ENCODE measurements at regions of chr12 and their contacts with region 1.

Region 1: GRCh38 chr12:52023182-52023975 is 16.6 kb downstream of the TAMALIN start:
- DNase-seq: peak; percentile 96
- H3K4me3 Mint-ChIP-seq: peak overlapping the region; percentile 84
- H3K27ac Mint-ChIP-seq: peak overlapping the region; percentile 99
- H3K4me1 Mint-ChIP-seq: peaks cover 51% of the 10 kb centered on the region
- H3K27me3 Mint-ChIP-seq: peaks cover 41% of the 10 kb centered on the region

Region 2: DNA sequence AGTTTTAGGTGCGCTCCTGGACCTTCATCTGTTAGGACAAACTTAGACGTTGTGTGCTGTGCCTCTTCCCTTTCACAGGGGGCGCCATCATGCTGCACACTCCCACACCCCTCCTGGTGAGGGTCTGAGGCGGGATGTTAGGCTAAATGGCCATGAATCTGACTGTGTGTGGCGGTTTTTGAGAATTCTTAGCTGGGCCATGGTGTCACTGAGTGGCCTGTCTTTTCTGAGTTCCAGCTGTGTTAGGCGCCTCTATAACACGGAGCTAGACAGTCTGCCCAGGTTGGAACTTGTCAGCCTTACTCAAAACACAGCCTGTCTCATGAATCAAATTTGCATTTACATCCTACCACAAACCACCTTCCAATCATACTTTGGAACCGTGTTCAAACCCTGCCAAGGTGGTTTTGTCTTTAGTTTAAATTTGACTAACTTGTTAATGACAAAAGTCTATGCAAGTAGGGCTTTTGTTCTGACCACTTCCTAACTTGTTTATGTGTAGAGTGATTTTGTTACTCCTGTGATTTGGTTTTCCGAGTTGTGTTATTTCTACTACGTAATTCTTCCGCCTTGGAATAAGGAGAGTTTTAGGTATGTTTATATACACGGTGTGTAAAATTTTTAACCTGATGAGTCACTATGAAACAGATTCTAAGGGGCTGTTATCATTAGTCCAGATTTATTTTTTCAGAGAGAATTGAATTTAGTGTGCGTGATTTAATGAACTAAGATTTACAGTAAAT is 52.3 kb before region 1 on chr12:
- CTCF ChIA-PET with region 1: interaction called, 11 read pairs
- DNase-seq: peak; percentile 43
- H3K4me3 Mint-ChIP-seq: peak overlapping the region; percentile 25
- H3K27ac Mint-ChIP-seq: peak overlapping the region; percentile 84
- H3K4me1 Mint-ChIP-seq: peaks cover 62% of the 10 kb centered on the region
- H3K27me3 Mint-ChIP-seq: peaks cover 3% of the 10 kb centered on the region

Region 3: GRCh38 chr12:51994959-51995358 is 28.4 kb before region 1 on chr12:
- CTCF ChIA-PET with region 1: interaction called, 254 read pairs
- DNase-seq: no peak
- H3K4me3 Mint-ChIP-seq: no peak overlapping the region
- H3K27ac Mint-ChIP-seq: no peak overlapping the region
- H3K4me1 Mint-ChIP-seq: peaks cover 3% of the 10 kb centered on the region
- H3K27me3 Mint-ChIP-seq: no peaks in the 10 kb centered on the region

Region 4: GRCh38 chr12:52041695-52042123 is 18.3 kb after region 1 on chr12:
- CTCF ChIA-PET with region 1: interaction called, 44 read pairs
- DNase-seq: peak; percentile 62
- H3K4me3 Mint-ChIP-seq: no peak overlapping the region
- H3K27ac Mint-ChIP-seq: peak overlapping the region; percentile 50
- H3K4me1 Mint-ChIP-seq: peaks cover 50% of the 10 kb centered on the region
- H3K27me3 Mint-ChIP-seq: peaks cover 37% of the 10 kb centered on the region

Region 5: DNA sequence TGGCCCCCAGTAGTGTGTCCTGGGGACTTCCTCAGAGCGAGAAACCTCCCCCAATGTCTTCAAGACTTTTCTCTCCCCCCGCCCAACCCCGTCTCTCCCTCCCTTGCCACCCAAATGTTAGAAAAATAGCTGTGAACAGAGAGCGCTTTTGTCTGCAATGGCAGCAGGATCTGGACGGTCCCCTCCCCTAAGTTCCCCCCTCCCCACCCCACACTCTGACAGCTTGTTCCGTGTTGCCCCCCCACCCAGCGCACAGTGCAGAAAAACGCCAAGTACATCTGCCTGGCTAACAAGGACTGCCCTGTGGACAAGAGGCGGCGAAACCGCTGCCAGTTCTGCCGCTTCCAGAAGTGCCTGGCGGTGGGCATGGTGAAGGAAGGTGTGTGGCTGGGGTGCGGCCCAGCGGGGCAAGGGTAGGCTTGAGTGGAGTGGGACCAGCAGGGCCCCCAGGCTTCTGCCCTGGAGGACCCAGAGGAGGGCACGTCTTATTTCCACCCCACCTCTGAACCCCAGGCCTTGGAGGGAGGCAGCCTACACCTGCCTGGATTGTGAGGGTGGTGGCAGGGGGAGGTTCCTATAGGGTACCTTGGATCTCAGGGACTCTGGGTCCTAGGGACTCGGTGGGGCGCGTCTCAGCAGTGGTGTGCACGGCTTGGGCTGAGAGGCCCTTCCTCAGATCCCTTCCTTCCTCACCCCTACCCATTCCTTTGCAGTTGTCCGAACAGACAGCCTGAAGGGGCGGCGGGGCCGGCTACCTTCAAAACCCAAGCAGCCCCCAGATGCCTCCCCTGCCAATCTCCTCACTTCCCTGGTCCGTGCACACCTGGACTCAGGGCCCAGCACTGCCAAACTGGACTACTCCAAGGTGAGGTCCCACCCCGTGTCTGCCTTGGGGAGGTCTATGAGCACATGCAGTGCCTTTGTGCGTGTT is 32.7 kb after region 1 on chr12:
- CTCF ChIA-PET with region 1: interaction called, 637 read pairs
- DNase-seq: no peak
- H3K4me3 Mint-ChIP-seq: no peak overlapping the region
- H3K27ac Mint-ChIP-seq: no peak overlapping the region
- H3K4me1 Mint-ChIP-seq: peaks cover 20% of the 10 kb centered on the region
- H3K27me3 Mint-ChIP-seq: no peaks in the 10 kb centered on the region

Region 6: DNA sequence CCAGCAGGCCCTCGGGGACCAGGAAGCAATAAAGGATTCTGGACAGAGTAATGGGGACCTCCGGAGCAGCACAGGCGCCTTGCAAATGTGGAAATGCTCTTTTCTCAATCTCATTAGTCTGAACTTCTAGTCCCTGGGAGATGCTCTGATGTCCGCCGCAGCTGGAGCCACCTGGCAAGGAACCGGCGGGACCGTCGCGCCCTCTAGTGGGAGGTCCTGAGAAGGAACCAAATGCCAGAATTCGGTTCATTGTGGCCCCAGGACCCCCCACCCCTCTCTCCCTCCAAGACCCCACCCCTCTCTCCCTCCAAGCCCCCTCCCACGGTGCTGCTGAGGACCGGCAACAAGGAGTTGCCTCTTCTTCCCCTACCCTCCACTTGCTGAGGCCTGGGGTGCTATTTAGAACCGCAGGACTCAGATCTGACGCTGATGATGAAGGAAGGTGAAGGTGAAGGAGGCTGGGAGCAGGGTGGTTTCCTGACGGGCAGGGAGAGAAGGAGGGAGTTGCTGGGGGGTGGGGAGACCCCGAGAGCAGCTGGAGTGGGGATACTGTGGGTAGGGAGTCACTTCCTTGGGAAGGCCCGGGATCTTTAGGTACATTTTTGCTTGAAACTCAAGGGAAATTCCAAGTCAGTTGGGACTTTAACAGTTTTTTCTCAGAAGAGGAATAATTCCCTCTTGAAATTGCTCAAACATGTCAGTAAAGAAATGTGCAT is 98.6 kb after region 1 on chr12:
- CTCF ChIA-PET with region 1: interaction called, 94 read pairs
- DNase-seq: peak; percentile 79
- H3K4me3 Mint-ChIP-seq: no peak overlapping the region
- H3K27ac Mint-ChIP-seq: no peak overlapping the region
- H3K4me1 Mint-ChIP-seq: peaks cover 13% of the 10 kb centered on the region
- H3K27me3 Mint-ChIP-seq: peaks cover 81% of the 10 kb centered on the region

Region 7: GRCh38 chr12:52319097-52319496 is 295.7 kb after region 1 on chr12:
- CTCF ChIA-PET with region 1: no interaction called
- DNase-seq: peak; percentile 35
- H3K4me3 Mint-ChIP-seq: no peak overlapping the region
- H3K27ac Mint-ChIP-seq: no peak overlapping the region
- H3K4me1 Mint-ChIP-seq: no peaks in the 10 kb centered on the region
- H3K27me3 Mint-ChIP-seq: peaks cover 77% of the 10 kb centered on the region

Region 8: DNA sequence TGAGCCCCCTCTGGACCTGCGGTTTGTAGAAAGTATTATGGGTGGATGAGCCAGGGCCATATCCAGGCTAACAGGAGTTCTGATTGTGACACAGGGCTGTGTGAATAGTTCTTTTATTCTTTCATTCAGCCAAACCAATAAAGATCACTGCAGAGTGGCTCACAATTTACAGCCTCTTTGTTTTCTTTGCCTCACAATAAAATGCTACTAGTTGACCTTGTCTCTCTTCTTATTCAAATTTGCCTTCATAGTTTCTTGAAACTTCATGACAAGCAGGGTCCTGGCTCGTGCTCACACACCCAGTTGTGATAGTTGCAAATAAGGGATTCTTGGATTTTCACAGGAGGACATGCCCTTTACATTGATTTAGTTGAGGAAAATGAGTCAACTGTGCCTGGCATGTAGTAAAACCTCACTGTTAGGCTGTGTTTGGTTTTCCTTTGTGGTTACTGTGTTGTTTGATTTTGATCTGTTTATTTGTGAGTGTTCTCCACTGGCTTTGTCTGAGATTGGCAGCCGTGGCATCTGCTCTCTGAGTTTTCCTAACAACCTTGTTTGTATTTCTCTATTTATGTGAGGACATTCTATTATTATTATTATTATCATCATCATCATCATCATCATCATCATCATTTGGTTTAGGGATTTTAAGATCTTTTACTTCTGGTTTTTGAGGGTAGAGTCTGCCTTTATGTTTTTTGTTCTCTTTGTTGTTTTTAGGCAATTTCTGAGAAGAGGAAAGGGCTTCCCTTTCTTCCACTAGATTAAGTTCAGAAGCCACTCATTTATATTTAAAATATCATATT is 431.2 kb after region 1 on chr12:
- CTCF ChIA-PET with region 1: no interaction called
- DNase-seq: no peak
- H3K4me3 Mint-ChIP-seq: no peak overlapping the region
- H3K27ac Mint-ChIP-seq: no peak overlapping the region
- H3K4me1 Mint-ChIP-seq: no peaks in the 10 kb centered on the region
- H3K27me3 Mint-ChIP-seq: peaks cover 22% of the 10 kb centered on the region